H1 (cell line): ENCODE measurements at regions of chr12 and their contacts with region 1.

Region 1: GRCh38 chr12:114186241-114187002 is 219.5 kb downstream of the TBX5 start:
- DNase-seq: peak; percentile 53
- H3K4me3 ChIP-seq: peak overlapping the region in 1 of 4 experiments; percentile 23; a peak in 1 of 8 replicates
- H3K27ac ChIP-seq: no peak overlapping the region
- H3K4me1 ChIP-seq: peaks cover 3 to 10% (median 8%) of the 10 kb centered on the region in 4 experiments; a peak in 4 of 7 replicates
- H3K27me3 ChIP-seq: peaks cover 0 to 3% (median under 1%) of the 10 kb centered on the region in 4 experiments; a peak in 2 of 7 replicates
- CTCF ChIP-seq: no peak
- EP300 ChIP-seq: no peak
- POLR2A ChIP-seq: no peak
- RAD21 ChIP-seq: peak in 1 of 2 experiments; percentile 1; a peak in 1 of 4 replicates

Region 2: DNA sequence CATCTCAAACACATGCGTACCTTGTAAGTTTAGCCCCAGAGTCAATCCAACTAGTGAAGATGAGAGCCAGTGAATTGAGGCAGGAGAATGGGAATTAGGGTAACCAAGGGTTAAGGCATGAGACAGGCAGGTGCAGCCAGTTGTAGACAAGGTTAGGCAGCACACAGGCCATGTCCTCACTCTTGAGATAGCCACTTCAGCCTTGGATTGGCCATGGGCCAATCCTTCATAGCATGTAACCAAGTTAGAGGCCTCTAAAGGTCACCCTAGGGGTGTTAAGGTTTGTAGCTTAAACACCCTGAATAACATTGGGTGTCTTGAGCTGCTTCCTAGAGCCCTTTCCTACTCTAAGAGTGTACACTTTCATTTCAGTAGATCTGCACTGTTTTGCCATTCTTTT is 12.1 kb before region 1 on chr12:
- CTCF ChIA-PET with region 1: interaction called, 60 read pairs
- POLR2A ChIA-PET with region 1: interaction called, 4 read pairs
- DNase-seq: no peak
- H3K4me3 ChIP-seq: no peak overlapping the region
- H3K27ac ChIP-seq: no peak overlapping the region
- H3K4me1 ChIP-seq: 0 out of 7 replicates have a peak, but pooled peaks cover 0 to 2% (median 0%) of the 10 kb centered on the region in 4 experiments
- H3K27me3 ChIP-seq: peaks cover 0 to 5% (median 0%) of the 10 kb centered on the region in 4 experiments; a peak in 1 of 7 replicates
- CTCF ChIP-seq: no peak
- EP300 ChIP-seq: no peak
- POLR2A ChIP-seq: no peak
- RAD21 ChIP-seq: no peak